ENCODE measurements at regions of chr9 and their contacts with region 1.

Region 1: GRCh38 chr9:127930231-127931091 is at the start of gene PIP5KL1:
- DNase-seq: no peak
- ATAC-seq: peak; percentile 93
- H3K4me3 ChIP-seq: peak within 1 kb of the TSS; percentile 65
- H3K27ac ChIP-seq: no peak within 1 kb of the TSS
- H3K4me1 ChIP-seq: peaks cover 21% of the 10 kb centered on the region
- H3K27me3 ChIP-seq: peaks cover 2 to 4% of the 10 kb centered on the region in 2 experiments; a peak in 3 of 4 replicates
- CTCF ChIP-seq: no peak
- EP300 ChIP-seq: no peak
- POLR2A ChIP-seq: peak; percentile 51; the same call in 1 of the 2 replicates
- RAD21 ChIP-seq: no peak
- polyA plus RNA-seq, gene PIP5KL1: not detected

Region 2: DNA sequence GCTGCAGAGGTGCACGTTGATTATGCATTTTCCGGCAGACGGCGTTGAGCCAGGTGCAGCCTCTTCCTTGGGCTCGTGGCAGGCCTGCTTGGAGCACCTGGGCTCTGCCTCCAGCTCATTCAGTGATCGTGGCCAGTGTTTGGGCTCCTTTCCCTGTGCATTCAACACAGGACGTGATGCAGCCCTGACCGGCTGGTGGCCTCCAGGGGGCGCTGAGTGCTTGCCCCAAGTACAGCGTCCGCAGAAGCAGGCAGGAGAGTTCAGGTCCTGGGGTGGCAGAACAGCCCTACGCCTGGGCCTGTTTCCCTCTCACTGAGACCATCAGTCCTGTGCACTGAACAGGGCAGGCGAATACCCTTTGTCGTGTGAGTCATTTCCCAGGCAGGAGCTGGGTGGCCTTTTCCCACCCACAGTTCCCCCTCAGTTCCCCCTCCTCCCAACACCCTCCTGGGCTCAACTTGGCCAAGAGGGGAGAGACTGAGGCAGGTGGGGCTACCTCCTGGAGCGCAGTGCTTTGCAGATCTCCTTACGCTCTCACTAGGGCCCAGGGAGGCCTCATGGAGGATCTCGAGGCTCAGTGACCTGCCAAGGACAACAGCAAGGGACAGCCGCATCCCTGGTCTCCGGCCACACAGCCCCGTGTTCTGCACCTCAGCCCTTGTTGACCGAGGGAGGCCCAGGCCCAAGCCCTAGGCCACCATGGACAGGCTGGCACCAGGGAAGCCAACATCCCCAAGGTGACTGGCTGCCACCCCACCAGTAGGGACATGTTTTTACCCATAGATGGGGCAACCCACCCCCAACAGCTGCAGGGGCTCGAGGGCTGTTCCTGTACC is 426.3 kb before region 1 on chr9:
- CTCF ChIA-PET with region 1: no interaction called
- POLR2A ChIA-PET with region 1: no interaction called
- RAD21 ChIA-PET with region 1: no interaction called
- SMC1A ChIA-PET with region 1: no interaction called
- in situ Hi-C with region 1: loop called (anchors 5 kb)
- intact Hi-C with region 1: no loop called
- DNase-seq: no peak
- ATAC-seq: peak; percentile 89
- H3K4me3 ChIP-seq: no peak overlapping the region
- H3K27ac ChIP-seq: no peak overlapping the region
- H3K4me1 ChIP-seq: no peaks in the 10 kb centered on the region
- H3K27me3 ChIP-seq: no peaks in the 10 kb centered on the region
- CTCF ChIP-seq: peak; percentile 84 to 94 (median 93)
- EP300 ChIP-seq: no peak
- POLR2A ChIP-seq: no peak
- RAD21 ChIP-seq: peak; percentile 82

Region 3: DNA sequence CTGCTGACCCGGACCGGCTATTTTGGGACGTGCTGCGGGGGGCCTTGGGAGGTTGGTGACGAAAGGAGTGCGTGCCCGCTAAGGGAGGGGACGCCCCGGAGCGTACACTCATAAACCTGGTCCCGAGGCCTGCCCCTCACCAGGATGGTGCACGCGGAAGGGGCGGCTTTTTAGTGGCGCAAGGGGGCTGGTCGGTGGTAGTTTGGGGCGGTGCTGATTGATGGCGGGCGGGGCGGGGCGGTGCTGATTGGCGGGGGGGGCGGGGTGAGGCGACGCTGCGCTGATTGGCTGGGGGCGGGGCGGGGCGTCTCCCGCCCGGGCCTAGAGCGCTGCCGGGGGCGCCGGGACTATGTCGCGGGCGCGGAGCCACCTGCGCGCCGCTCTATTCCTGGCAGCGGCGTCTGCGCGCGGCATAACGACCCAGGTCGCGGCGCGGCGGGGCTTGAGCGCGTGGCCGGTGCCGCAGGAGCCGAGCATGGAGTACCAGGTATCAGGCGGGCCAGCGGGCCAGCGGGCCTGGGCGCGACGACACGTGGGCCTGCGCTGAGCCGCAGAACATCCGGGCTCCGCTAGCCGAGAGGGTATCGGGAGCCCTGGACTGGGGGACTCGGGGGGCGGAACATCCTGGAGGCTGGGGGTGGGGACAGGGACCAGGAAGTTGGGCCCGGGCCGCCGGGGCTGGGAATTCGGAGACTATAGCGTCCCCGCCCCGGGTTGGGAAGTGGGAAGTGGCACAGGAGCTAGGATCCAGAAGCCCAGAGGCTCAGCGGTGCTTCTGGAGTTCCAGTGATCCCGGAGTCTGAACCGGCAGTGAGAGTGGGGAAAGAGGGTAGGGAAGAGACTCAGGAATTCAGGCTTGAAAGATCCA is 127.7 kb before region 1 on chr9 and contains the start of gene FPGS:
- CTCF ChIA-PET with region 1: no interaction called
- POLR2A ChIA-PET with region 1: no interaction called
- RAD21 ChIA-PET with region 1: no interaction called
- SMC1A ChIA-PET with region 1: no interaction called
- in situ Hi-C with region 1: no loop called
- intact Hi-C with region 1: no loop called
- DNase-seq: peak; percentile 49
- ATAC-seq: peak; percentile 91
- H3K4me3 ChIP-seq: peak within 1 kb of the TSS; percentile 85
- H3K27ac ChIP-seq: peak within 1 kb of the TSS; percentile 97
- H3K4me1 ChIP-seq: peaks cover 16% of the 10 kb centered on the region
- H3K27me3 ChIP-seq: no peaks in the 10 kb centered on the region
- CTCF ChIP-seq: no peak
- EP300 ChIP-seq: no peak
- POLR2A ChIP-seq: peak; percentile 93
- RAD21 ChIP-seq: no peak
- polyA plus RNA-seq, gene FPGS: 1.2 to 8.2 TPM

Measured in GM12878 (cell line).